ENCODE measurements at regions of chr3 and their contacts with region 1.

Region 1: DNA sequence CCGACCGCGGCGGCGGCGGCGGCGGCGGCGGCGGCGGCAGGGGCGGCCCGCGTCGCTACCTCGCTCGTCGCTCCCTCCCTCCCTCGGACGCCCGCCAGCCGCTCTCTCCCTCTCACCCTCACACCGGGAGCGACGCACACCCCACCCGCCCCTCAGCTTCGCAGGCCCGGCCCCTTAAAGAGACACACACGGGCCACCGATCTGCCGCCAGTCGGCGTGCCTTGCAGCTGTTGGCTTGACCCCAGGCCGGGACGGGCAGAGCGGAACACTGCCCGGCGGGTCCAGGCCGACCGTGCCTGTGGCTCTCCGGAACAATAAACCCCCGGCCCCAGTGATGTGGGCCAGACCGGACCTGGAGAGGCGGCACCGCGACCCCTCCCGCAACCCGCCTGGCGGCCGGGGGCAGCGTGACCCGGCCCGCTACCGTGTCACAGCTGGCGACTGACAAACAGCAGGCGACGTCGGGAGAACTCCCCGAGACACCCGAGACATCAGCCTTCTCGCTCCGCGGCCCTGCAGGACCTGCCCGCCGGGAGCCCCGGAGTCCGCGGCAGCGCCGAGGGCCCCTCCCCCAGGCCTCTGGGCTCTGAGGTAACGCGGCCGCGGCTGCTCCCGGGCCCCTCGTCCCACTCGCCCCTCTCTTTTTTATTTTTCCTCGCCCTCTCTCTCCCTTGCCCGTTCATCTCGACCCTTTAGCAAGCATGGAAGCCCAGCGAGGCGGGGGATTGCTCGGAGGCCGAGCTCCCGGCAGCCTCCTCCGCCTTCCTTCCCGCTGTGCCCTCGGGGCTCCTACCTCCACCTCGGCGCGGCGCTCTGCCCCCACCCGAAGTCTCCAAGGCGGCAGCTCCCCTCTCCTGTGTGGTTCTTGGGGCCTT is at the start of gene SETD2:
- DNase-seq: peak; percentile 91
- H3K4me3 Mint-ChIP-seq: peak within 1 kb of the TSS; percentile 97
- H3K27ac Mint-ChIP-seq: peak within 1 kb of the TSS; percentile 99
- H3K4me1 Mint-ChIP-seq: peaks cover 43% of the 10 kb centered on the region
- H3K27me3 Mint-ChIP-seq: peaks cover 1% of the 10 kb centered on the region
- total RNA-seq, gene SETD2: 31.2 to 31.8 TPM

Region 2: DNA sequence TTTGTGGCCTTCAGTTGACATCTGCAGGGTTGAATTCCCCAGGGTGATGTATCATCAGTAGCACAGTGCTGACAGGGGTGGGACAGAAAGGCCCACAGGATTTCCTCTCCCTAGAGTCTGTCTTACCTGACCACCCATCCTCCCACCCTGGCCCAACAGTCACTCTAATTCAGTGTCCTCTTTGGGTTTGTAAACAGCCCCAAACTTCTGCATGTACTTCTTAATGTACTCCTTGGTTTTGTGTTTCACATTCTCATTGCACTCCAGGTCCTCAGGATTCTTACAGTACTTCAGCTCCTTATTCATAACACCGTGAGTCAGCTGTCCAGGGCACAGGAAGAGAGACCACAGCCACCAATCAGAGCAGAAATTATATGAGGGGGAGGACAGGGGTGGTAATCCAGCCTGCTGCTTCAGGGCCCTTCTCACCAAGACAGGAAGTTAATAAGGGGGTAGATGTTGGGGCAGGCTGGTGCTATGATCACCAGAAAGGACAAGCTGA is 147.3 kb before region 1 on chr3:
- CTCF ChIA-PET with region 1: no interaction called
- POLR2A ChIA-PET with region 1: no interaction called
- intact Hi-C with region 1: loop called (anchors 5 kb)
- DNase-seq: peak; percentile 71
- H3K4me3 Mint-ChIP-seq: peak overlapping the region; percentile 8
- H3K27ac Mint-ChIP-seq: peak overlapping the region; percentile 92
- H3K4me1 Mint-ChIP-seq: peaks cover 47% of the 10 kb centered on the region
- H3K27me3 Mint-ChIP-seq: no peaks in the 10 kb centered on the region

Region 3: GRCh38 chr3:47057212-47057671 is 107.0 kb before region 1 on chr3:
- CTCF ChIA-PET with region 1: no interaction called
- POLR2A ChIA-PET with region 1: no interaction called
- intact Hi-C with region 1: loop called (anchors 1 kb)
- DNase-seq: peak; percentile 75
- H3K4me3 Mint-ChIP-seq: peak overlapping the region; percentile 10
- H3K27ac Mint-ChIP-seq: peak overlapping the region; percentile 33
- H3K4me1 Mint-ChIP-seq: peaks cover 41% of the 10 kb centered on the region
- H3K27me3 Mint-ChIP-seq: no peaks in the 10 kb centered on the region

Region 4: GRCh38 chr3:47186285-47186684 is 22.0 kb after region 1 on chr3:
- CTCF ChIA-PET with region 1: no interaction called
- POLR2A ChIA-PET with region 1: no interaction called
- intact Hi-C with region 1: no loop called
- DNase-seq: no peak
- H3K4me3 Mint-ChIP-seq: no peak overlapping the region
- H3K27ac Mint-ChIP-seq: no peak overlapping the region
- H3K4me1 Mint-ChIP-seq: no peaks in the 10 kb centered on the region
- H3K27me3 Mint-ChIP-seq: no peaks in the 10 kb centered on the region

Region 5: DNA sequence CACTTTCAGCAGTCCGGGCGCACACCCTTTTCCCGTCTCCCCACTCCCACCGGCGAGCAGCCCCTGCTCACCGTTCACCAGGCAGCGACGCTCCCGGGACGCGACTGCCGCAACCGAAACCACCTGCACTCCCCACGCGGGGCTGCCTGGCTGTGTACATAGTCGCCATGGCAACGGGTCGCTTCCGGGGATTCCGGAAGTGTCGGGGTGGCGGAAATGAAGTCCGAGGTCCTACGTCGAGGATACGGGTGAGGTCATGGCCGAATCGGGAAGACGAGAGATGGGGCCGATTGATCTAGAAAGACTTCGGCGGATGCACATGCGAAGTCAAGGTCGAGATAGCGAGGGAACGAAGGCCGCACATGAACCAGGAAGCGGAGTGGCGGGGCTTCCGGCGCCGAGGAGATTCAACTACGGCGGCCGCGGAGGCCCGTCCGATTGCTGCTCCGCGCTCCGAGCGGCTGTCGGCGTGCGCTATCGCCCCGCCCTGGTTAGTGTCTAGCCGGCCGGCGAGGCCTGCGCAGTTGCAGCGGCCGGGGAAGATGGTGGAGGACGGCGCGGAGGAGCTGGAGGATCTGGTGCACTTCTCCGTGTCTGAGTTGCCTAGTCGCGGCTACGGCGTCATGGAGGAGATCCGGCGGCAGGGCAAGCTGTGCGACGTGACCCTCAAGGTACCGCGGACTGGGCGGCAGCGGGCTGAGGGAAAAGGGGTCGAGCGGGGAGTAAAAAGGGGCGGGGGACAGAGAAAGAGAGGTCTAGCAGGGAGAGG is 118.4 kb after region 1 on chr3 and contains the starts of genes KIF9 and KLHL18:
- CTCF ChIA-PET with region 1: interaction called, 4 read pairs
- POLR2A ChIA-PET with region 1: interaction called, 19 read pairs
- intact Hi-C with region 1: loop called (anchors 1 kb)
- DNase-seq: peak; percentile 97
- H3K4me3 Mint-ChIP-seq: peak within 1 kb of the TSS; percentile 98
- H3K27ac Mint-ChIP-seq: peak within 1 kb of the TSS; percentile 100
- H3K4me1 Mint-ChIP-seq: peaks cover 39% of the 10 kb centered on the region
- H3K27me3 Mint-ChIP-seq: peaks cover 3% of the 10 kb centered on the region
- total RNA-seq, gene KIF9: 3.3 to 4.9 TPM
- total RNA-seq, gene KLHL18: 21.2 to 23.7 TPM

Region 6: GRCh38 chr3:47380601-47381316 is 216.5 kb after region 1 on chr3 and contains the start of gene PTPN23:
- CTCF ChIA-PET with region 1: interaction called, 7 read pairs
- POLR2A ChIA-PET with region 1: interaction called, 10 read pairs
- intact Hi-C with region 1: loop called (anchors 2 kb)
- DNase-seq: peak; percentile 99
- H3K4me3 Mint-ChIP-seq: peak within 1 kb of the TSS; percentile 99
- H3K27ac Mint-ChIP-seq: peak within 1 kb of the TSS; percentile 98
- H3K4me1 Mint-ChIP-seq: peaks cover 47% of the 10 kb centered on the region
- H3K27me3 Mint-ChIP-seq: no peaks in the 10 kb centered on the region
- total RNA-seq, gene PTPN23: 27.9 to 29.7 TPM

Measured in activated CD4-positive, alpha-beta memory T cell treated with anti-CD3 and anti-CD28 coated beads for 36 hours (primary cell).